ENCODE measurements at regions of chr1 and their contacts with region 1.

Region 1: GRCh38 chr1:98048244-98048643 is 127.4 kb upstream of the DPYD start:
- DNase-seq: peak; percentile 46 to 59
- H3K4me3 ChIP-seq: no peak overlapping the region
- H3K27ac ChIP-seq: no peak overlapping the region
- H3K4me1 ChIP-seq: peaks cover 0 to 6% of the 10 kb centered on the region in 2 donors
- H3K27me3 ChIP-seq: peaks cover 3 to 46% of the 10 kb centered on the region in 2 donors
- CTCF ChIP-seq: peak in 1 of 4 experiments; percentile 5
- POLR2A ChIP-seq: no peak

Region 2: GRCh38 chr1:96236156-96236739 is 1812.0 kb before region 1 on chr1:
- intact Hi-C with region 1: loop called (anchors 5 kb)
- DNase-seq: peak; percentile 15 to 44
- H3K4me3 ChIP-seq: no peak overlapping the region
- H3K27ac ChIP-seq: no peak overlapping the region
- H3K4me1 ChIP-seq: no peaks in the 10 kb centered on the region
- H3K27me3 ChIP-seq: no peaks in the 10 kb centered on the region
- CTCF ChIP-seq: peak; percentile 53 to 58 (median 56)
- POLR2A ChIP-seq: no peak

Measured in uterus (tissue), 4 donors.